ENCODE measurements at regions of chr21 and their contacts with region 1.

Region 1: DNA sequence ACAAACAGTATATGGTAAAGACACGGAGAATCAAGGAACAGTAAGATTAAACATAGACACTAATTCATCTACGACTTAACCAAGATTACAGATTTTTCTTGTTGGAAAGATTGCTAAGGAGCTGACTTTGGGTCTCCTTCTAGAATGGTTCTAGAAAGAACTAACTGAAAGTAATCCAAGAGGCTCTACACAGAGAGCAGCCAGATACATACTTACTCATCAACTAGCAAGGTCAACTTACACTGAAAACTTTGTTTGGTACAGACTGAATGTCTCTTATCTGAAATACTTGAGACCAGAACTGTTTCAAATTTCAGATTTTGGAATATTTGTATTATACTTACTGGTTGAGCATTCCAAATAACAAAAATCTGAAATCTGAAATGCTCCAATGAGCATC is 5.8 kb downstream of the C21orf91 start:
- DNase-seq: no peak
- ATAC-seq: no peak
- H3K4me3 ChIP-seq: no peak overlapping the region
- H3K4me3 Mint-ChIP-seq: no peak overlapping the region
- H3K27ac ChIP-seq: no peak overlapping the region
- H3K27ac Mint-ChIP-seq: peak overlapping the region; percentile 31
- H3K4me1 ChIP-seq: peaks cover 22% of the 10 kb centered on the region
- H3K4me1 Mint-ChIP-seq: peaks cover 77% of the 10 kb centered on the region
- H3K27me3 ChIP-seq: no peaks in the 10 kb centered on the region
- H3K27me3 Mint-ChIP-seq: no peaks in the 10 kb centered on the region
- CTCF ChIP-seq: no peak

Region 2: DNA sequence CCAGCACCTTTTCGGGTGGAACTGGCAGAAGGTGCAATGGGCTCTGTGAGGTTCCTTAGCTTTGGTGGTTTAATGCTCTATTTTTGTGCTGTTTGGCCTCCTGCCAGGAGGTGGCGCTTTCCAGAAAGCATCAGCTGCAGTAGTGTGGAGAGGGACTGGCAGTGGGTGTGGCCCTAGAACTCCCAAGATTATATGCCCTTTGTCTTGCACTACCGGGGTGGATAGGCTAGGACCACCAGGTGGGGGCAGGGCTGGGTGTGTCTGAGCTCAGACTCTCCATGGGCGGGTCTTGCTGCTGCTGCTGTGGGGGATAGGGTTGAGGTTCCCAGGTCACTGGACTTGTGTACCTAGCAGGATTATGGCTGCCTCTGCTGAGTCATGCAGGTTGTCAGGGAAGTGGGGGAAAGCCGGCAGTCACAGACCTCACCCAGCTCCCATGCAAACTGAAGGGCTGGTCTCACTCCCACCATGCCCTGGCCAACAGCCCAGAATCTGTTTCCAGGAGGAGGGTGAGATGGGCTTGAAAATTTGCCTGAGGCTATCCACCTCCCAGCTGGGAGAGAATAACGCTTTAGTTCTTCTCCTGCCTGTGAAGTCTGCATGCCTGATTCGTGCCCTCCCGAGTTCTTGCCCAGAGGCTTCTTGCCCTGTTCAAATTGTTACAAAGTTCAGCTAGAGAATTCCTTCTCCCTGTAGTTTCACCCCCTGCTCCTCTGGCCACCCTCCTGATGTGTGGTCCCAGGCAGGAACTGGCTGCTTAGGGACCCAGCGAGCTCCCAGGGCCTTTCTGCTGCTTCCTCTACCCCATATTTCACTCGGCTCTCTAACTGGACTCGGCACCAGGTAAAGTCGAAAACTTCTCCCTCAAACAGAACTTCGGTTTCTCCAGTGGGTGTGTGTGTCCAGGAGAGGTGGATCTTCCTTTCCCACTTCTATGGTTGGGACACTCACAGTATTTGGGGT is 124.2 kb before region 1 on chr21:
- CTCF ChIA-PET with region 1: no interaction called
- POLR2A ChIA-PET with region 1: no interaction called
- intact Hi-C with region 1: loop called (anchors 2 to 5 kb)
- DNase-seq: peak; percentile 23 to 59 (median 40)
- ATAC-seq: no peak
- H3K4me3 ChIP-seq: no peak overlapping the region
- H3K4me3 Mint-ChIP-seq: no peak overlapping the region
- H3K27ac ChIP-seq: no peak overlapping the region
- H3K27ac Mint-ChIP-seq: no peak overlapping the region
- H3K4me1 ChIP-seq: peaks cover 15% of the 10 kb centered on the region
- H3K4me1 Mint-ChIP-seq: peaks cover 36% of the 10 kb centered on the region
- H3K27me3 ChIP-seq: no peaks in the 10 kb centered on the region
- H3K27me3 Mint-ChIP-seq: no peaks in the 10 kb centered on the region
- CTCF ChIP-seq: peak; percentile 30

Region 3: GRCh38 chr21:17793246-17794123 is 19.9 kb before region 1 on chr21:
- CTCF ChIA-PET with region 1: interaction called, 7 read pairs
- POLR2A ChIA-PET with region 1: interaction called, 71 read pairs
- intact Hi-C with region 1: loop called in 1 of 2 experiments (anchors 2 kb)
- DNase-seq: peak in 3 of 14 experiments; percentile 57 to 79 (median 58)
- ATAC-seq: peak; percentile 61
- H3K4me3 ChIP-seq: peak overlapping the region; percentile 48
- H3K4me3 Mint-ChIP-seq: peak overlapping the region; percentile 84
- H3K27ac ChIP-seq: peak overlapping the region; percentile 61 to 81
- H3K27ac Mint-ChIP-seq: peak overlapping the region; percentile 94
- H3K4me1 ChIP-seq: peaks cover 13% of the 10 kb centered on the region
- H3K4me1 Mint-ChIP-seq: peaks cover 78% of the 10 kb centered on the region
- H3K27me3 ChIP-seq: no peaks in the 10 kb centered on the region
- H3K27me3 Mint-ChIP-seq: no peaks in the 10 kb centered on the region
- CTCF ChIP-seq: no peak

Region 4: GRCh38 chr21:18603261-18603660 is 789.9 kb after region 1 on chr21:
- CTCF ChIA-PET with region 1: no interaction called
- POLR2A ChIA-PET with region 1: no interaction called
- intact Hi-C with region 1: no loop called
- DNase-seq: no peak
- ATAC-seq: no peak
- H3K4me3 ChIP-seq: no peak overlapping the region
- H3K4me3 Mint-ChIP-seq: no peak overlapping the region
- H3K27ac ChIP-seq: no peak overlapping the region
- H3K27ac Mint-ChIP-seq: no peak overlapping the region
- H3K4me1 ChIP-seq: no peaks in the 10 kb centered on the region
- H3K4me1 Mint-ChIP-seq: no peaks in the 10 kb centered on the region
- H3K27me3 ChIP-seq: no peaks in the 10 kb centered on the region
- H3K27me3 Mint-ChIP-seq: no peaks in the 10 kb centered on the region
- CTCF ChIP-seq: no peak

Measured in CD4-positive, alpha-beta T cell (primary cell).